MCF 10A (cell line): ENCODE measurements at regions of chr12 and their contacts with region 1.

Region 1: DNA sequence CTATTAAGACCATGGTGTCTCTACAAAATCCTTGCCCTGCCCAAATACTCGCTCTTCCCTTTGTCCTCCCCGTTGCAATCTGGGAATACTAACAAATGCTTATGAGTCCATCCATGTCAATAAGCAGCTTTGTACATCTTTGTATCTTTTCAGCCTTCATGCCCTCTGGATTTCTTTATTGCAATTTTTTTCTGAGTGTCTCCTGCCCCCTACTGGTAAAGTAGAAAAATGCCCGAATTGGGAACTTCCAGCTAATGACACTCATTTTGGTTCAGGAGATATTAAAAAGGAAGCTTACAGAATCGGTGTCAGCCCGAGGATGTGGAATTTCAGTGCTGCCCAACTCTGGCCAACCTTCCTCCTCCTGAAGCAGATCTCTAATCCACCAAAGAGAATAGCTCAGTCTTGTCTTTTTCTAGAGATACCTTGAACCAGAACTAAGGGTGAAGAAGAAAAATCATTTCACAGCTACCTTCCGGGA is 46.0 kb downstream of the SH2B3 start:
- DNase-seq: peak; percentile 56
- H3K4me3 Mint-ChIP-seq: no peak overlapping the region
- H3K27ac Mint-ChIP-seq: no peak overlapping the region
- H3K4me1 Mint-ChIP-seq: peaks cover 6% of the 10 kb centered on the region
- H3K27me3 Mint-ChIP-seq: no peaks in the 10 kb centered on the region
- CTCF ChIP-seq: peak; percentile 61

Region 2: DNA sequence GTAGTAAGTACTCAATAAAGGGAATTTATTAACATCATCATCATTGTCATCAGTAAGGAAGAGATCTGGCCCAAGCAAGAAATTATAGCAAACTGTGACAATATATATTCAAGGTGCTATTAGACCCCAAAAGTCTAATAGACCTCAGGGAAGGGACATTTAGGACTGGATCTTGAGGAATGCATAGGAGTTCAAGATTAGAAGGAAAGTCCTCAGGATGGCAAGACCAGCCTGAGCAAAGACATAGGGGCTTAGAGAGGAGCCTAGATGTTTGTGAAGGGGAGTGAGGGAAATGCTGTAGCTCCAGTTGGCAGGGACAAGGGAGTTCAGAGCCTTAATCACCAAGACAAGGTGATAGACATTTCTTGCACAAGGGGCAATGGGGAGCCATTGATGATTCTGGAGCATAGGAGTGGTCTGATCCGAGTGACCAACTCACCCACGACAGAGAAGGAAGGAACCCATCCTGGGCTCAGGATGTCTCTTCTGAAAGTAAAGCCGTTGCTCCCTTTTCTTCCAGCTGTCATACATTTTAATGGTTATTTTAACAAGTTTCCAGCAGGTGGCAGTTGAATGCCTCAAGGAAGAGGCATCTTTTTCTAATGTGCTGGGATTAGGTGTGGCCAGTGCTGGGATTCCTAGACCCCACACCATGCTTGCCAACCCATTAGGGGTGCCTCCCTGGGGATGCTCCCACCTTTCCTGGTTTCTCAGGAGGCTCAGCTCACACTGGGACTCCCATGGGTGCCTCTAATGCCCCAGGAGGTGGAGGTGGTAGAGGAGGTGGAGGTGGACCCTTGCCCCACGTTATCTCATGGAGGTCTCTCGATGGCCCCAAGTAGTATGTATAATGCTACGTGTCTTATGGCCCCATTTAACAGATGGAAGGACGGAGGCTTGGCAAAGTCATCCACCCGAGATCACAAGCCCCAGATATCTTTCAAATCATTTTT is 120.6 kb before region 1 on chr12:
- CTCF ChIA-PET with region 1: interaction called, 30 read pairs
- POLR2A ChIA-PET with region 1: interaction called, 7 read pairs
- intact Hi-C with region 1: loop called (anchors 1 kb)
- DNase-seq: peak; percentile 65
- H3K4me3 Mint-ChIP-seq: no peak overlapping the region
- H3K27ac Mint-ChIP-seq: no peak overlapping the region
- H3K4me1 Mint-ChIP-seq: peaks cover 7% of the 10 kb centered on the region
- H3K27me3 Mint-ChIP-seq: peaks cover 21% of the 10 kb centered on the region
- CTCF ChIP-seq: peak; percentile 56

Region 3: DNA sequence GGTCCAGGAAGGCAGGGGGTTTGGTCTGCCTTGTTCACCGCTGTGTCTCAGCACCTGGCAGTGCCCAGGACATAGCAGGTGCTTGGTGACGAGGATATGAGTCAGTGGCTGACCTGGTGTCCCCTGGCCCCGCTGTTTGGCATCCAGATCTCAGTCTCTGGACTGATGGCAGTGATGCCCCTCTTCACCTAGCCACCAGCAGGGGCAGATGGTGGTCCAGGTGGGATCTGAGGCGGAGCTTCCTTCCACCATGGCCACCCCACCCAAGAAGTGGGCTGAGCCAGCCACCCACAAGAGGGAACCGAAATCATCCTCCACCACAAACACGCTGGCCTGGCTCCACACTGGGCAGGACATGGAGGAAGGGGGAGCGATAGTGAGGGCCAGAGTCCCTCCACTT is 62.1 kb before region 1 on chr12:
- CTCF ChIA-PET with region 1: interaction called, 183 read pairs
- POLR2A ChIA-PET with region 1: no interaction called
- intact Hi-C with region 1: no loop called
- DNase-seq: no peak
- H3K4me3 Mint-ChIP-seq: no peak overlapping the region
- H3K27ac Mint-ChIP-seq: no peak overlapping the region
- H3K4me1 Mint-ChIP-seq: peaks cover 10% of the 10 kb centered on the region
- H3K27me3 Mint-ChIP-seq: peaks cover 24% of the 10 kb centered on the region
- CTCF ChIP-seq: no peak

Region 4: DNA sequence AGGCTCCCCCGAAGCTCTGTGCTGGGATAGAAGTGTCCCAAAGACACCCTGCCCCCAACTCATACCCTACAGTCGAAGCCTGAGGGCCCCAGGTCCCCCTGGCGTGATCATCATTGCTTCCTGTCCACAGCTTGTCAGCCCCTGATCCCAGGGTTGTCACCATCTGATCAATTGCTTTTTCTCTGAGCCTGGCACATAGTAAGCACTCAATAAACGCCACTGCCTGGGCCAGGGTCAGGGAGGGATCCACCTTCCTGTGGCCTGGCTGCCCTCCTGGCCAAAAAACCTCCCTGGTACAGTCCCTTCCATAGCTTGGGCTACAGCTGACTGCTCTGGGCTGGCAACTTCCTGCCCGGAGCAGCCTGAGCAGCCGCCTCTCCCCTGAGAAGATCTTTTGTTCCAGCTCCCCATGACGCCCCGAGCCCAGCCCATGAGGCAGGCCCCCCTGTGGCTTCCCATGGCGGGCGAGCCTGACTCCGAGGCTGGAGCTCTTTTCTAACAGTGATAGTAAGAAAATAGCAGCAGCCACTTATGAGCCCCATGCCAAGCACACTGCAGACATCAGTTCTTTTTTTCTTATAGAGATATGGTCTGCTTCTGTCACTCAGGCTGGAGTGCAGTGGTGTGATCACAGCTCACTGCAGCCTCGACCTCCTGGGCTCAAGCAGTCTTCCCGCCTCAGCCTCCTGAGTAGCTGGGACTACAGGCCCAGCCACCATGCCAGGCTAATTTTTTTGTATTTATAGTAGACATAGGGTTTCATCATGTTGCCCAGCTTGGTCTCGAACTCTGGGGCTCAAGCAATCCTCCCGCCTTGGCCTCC is 39.5 kb before region 1 on chr12:
- CTCF ChIA-PET with region 1: interaction called, 10 read pairs
- POLR2A ChIA-PET with region 1: interaction called, 3 read pairs
- intact Hi-C with region 1: no loop called
- DNase-seq: no peak
- H3K4me3 Mint-ChIP-seq: no peak overlapping the region
- H3K27ac Mint-ChIP-seq: no peak overlapping the region
- H3K4me1 Mint-ChIP-seq: peaks cover 12% of the 10 kb centered on the region
- H3K27me3 Mint-ChIP-seq: no peaks in the 10 kb centered on the region
- CTCF ChIP-seq: no peak

Region 5: DNA sequence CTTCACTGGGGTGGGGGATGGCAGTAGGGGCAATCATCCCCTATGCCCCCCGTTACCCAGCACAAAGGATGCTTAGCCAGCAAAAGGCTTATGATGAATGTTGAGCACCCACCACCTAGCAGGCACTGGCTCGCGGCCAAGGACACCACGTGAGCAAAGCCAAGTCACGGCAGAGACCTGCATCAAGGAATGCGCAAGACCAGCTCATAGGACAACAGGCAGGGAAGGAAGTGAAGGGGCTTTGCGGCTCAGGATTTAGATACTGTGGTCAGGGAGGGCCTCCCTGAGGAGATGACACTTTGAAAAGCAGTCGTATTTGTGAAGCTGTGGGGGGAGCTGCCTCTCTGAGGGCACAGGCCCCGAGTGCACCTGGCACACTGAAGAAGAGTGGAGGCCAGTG is 13.2 kb before region 1 on chr12:
- CTCF ChIA-PET with region 1: interaction called, 19 read pairs
- POLR2A ChIA-PET with region 1: interaction called, 6 read pairs
- intact Hi-C with region 1: no loop called
- DNase-seq: peak; percentile 82
- H3K4me3 Mint-ChIP-seq: no peak overlapping the region
- H3K27ac Mint-ChIP-seq: peak overlapping the region; percentile 50
- H3K4me1 Mint-ChIP-seq: peaks cover 41% of the 10 kb centered on the region
- H3K27me3 Mint-ChIP-seq: no peaks in the 10 kb centered on the region
- CTCF ChIP-seq: no peak

Region 6: GRCh38 chr12:111462210-111462769 is 10.6 kb after region 1 on chr12:
- CTCF ChIA-PET with region 1: interaction called, 20 read pairs
- POLR2A ChIA-PET with region 1: no interaction called
- intact Hi-C with region 1: no loop called
- DNase-seq: no peak
- H3K4me3 Mint-ChIP-seq: no peak overlapping the region
- H3K27ac Mint-ChIP-seq: no peak overlapping the region
- H3K4me1 Mint-ChIP-seq: no peaks in the 10 kb centered on the region
- H3K27me3 Mint-ChIP-seq: no peaks in the 10 kb centered on the region
- CTCF ChIP-seq: no peak

Region 7: GRCh38 chr12:111715279-111715678 is 263.6 kb after region 1 on chr12:
- CTCF ChIA-PET with region 1: no interaction called
- POLR2A ChIA-PET with region 1: no interaction called
- intact Hi-C with region 1: no loop called
- DNase-seq: no peak
- H3K4me3 Mint-ChIP-seq: no peak overlapping the region
- H3K27ac Mint-ChIP-seq: no peak overlapping the region
- H3K4me1 Mint-ChIP-seq: no peaks in the 10 kb centered on the region
- H3K27me3 Mint-ChIP-seq: no peaks in the 10 kb centered on the region
- CTCF ChIP-seq: no peak